Breast epithelium (tissue), 4 donors: ENCODE measurements at regions of chr3 and their contacts with region 1.

Region 1: DNA sequence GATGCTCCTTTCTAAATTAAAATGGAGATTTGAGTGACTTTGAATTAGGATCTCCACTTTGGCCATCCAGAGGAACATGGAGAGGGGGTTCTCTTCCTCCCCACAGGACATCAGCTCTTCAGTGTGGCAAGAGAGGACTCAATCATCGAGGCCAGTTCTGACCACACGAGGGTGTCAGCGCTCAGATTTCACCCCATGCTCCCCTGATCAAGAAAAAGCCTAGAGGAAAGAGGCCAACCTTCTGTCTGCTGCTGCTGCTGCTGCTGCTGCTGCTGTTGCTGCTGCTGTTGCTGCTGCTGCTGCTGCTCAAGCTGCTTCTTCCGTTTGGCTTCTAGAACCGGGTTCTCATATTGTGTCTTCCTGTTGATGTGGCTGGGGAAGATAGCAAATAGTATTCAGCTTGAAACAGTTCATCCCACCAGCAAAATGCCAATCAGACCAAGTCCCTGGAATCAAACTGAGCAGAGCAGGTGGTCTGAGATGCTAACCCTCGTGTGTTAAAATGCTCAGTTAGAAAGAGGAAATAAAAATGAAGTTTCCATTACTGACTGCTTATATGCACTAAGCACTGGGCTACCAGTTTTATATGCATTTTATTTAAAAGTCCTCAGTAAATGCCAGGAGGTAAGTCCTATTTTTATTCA is 599.0 kb downstream of the MAGI1 start:
- DNase-seq: peak in 1 of 2 donors; percentile 52
- H3K4me3 ChIP-seq: no peak overlapping the region
- H3K27ac ChIP-seq: no peak overlapping the region
- H3K4me1 ChIP-seq: no peaks in the 10 kb centered on the region
- H3K27me3 ChIP-seq: no peaks in the 10 kb centered on the region
- CTCF ChIP-seq: peak in 2 of 3 donors; percentile 35 to 36
- POLR2A ChIP-seq: no peak

Region 2: DNA sequence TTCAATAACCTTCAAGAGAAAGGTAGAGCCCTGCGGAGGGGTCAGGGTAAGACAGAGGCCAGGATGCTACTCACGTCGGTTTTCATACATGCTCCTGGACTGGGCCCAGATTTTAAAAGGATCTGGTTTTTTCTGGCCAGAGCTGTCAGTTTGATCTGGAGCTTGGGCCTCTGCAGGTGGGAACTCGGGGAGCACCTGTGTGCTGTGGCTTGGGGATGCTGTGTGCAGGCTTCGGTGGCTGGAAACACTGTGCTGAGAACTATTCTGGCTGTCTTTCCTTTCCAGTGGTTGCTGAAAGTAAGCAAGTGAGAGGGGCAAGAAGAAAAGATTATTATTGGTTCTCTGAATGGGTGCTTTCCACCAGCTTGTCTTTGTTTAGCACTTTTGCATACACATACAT is 48.7 kb before region 1 on chr3:
- intact Hi-C with region 1: loop called (anchors 2 kb)
- DNase-seq: no peak
- H3K4me3 ChIP-seq: no peak overlapping the region
- H3K27ac ChIP-seq: no peak overlapping the region
- H3K4me1 ChIP-seq: no peaks in the 10 kb centered on the region
- H3K27me3 ChIP-seq: no peaks in the 10 kb centered on the region
- CTCF ChIP-seq: no peak
- POLR2A ChIP-seq: no peak